Activated naive CD4-positive, alpha-beta T cell treated with anti-CD3 and anti-CD28 coated beads for 36 hours (primary cell): ENCODE measurements at regions of chr15 and their contacts with region 1.

Region 1: GRCh38 chr15:89874926-89875564 is 18.7 kb downstream of the AP3S2 start:
- DNase-seq: peak; percentile 90
- H3K4me3 Mint-ChIP-seq: no peak overlapping the region
- H3K27ac Mint-ChIP-seq: no peak overlapping the region
- H3K4me1 Mint-ChIP-seq: peaks cover 3% of the 10 kb centered on the region
- H3K27me3 Mint-ChIP-seq: no peaks in the 10 kb centered on the region

Region 2: GRCh38 chr15:89740137-89740536 is 134.9 kb before region 1 on chr15:
- CTCF ChIA-PET with region 1: interaction called, 52 read pairs
- intact Hi-C with region 1: loop called (anchors 1 kb)
- DNase-seq: peak; percentile 71
- H3K4me3 Mint-ChIP-seq: no peak overlapping the region
- H3K27ac Mint-ChIP-seq: no peak overlapping the region
- H3K4me1 Mint-ChIP-seq: peaks cover 1% of the 10 kb centered on the region
- H3K27me3 Mint-ChIP-seq: peaks cover 11% of the 10 kb centered on the region

Region 3: GRCh38 chr15:89888214-89888804 is 13.3 kb after region 1 on chr15:
- CTCF ChIA-PET with region 1: interaction called, 10 read pairs
- intact Hi-C with region 1: no loop called
- DNase-seq: no peak
- H3K4me3 Mint-ChIP-seq: no peak overlapping the region
- H3K27ac Mint-ChIP-seq: no peak overlapping the region
- H3K4me1 Mint-ChIP-seq: peaks cover 23% of the 10 kb centered on the region
- H3K27me3 Mint-ChIP-seq: no peaks in the 10 kb centered on the region

Region 4: DNA sequence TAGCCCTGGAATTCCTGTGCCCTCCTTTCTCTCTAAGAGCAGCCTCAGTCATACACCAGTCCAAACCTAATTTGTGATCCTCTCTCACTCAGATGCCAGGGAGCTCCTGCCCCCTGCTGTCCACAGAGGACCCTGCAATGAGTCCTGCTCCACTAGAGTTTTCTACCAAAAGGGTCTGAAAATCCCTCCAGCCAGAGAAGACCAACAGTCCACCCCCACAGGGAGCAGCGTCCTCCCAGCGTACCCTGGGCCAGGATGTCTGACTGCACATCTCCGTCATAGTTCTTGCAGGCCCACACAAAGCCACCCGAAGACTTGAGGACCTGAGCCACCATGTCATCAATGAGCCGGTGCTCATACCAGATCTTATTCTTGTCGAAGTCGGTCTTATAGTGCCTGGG is 211.8 kb after region 1 on chr15:
- CTCF ChIA-PET with region 1: interaction called, 12 read pairs
- intact Hi-C with region 1: no loop called
- DNase-seq: peak; percentile 73
- H3K4me3 Mint-ChIP-seq: no peak overlapping the region
- H3K27ac Mint-ChIP-seq: no peak overlapping the region
- H3K4me1 Mint-ChIP-seq: peaks cover 6% of the 10 kb centered on the region
- H3K27me3 Mint-ChIP-seq: no peaks in the 10 kb centered on the region

Region 5: DNA sequence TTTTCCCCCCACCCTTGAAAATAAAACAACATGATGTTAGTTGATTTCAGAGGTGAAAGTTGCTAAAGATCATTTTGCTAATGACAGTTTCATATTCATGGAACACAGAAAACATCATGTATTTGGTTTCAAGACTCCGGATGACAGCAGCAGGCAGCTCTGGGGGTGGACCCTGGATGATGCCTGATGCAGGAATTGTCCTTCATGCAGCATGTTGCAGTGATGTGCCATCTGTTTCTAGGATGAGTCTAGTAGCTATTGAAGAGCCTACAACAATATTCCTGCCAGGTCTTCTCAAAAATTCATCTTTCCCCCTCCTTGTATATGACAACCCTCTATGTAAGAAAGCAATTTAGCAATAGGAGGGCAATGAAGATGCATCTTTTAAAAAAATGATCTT is 1333.3 kb after region 1 on chr15:
- CTCF ChIA-PET with region 1: no interaction called
- intact Hi-C with region 1: no loop called
- DNase-seq: no peak
- H3K4me3 Mint-ChIP-seq: no peak overlapping the region
- H3K27ac Mint-ChIP-seq: no peak overlapping the region
- H3K4me1 Mint-ChIP-seq: no peaks in the 10 kb centered on the region
- H3K27me3 Mint-ChIP-seq: peaks cover 13% of the 10 kb centered on the region